GM12878 (cell line): ENCODE measurements at regions of chr13 and their contacts with region 1.

Region 1: GRCh38 chr13:94674609-94675348 is 37.6 kb downstream of the SOX21 start:
- DNase-seq: no peak
- ATAC-seq: peak; percentile 83
- H3K4me3 ChIP-seq: no peak overlapping the region
- H3K27ac ChIP-seq: no peak overlapping the region
- H3K4me1 ChIP-seq: no peaks in the 10 kb centered on the region
- H3K27me3 ChIP-seq: no peaks in the 10 kb centered on the region; a peak in 2 of 4 replicates
- CTCF ChIP-seq: peak; percentile 73 to 80 (median 73)
- EP300 ChIP-seq: no peak
- POLR2A ChIP-seq: no peak
- RAD21 ChIP-seq: peak; percentile 68

Region 2: DNA sequence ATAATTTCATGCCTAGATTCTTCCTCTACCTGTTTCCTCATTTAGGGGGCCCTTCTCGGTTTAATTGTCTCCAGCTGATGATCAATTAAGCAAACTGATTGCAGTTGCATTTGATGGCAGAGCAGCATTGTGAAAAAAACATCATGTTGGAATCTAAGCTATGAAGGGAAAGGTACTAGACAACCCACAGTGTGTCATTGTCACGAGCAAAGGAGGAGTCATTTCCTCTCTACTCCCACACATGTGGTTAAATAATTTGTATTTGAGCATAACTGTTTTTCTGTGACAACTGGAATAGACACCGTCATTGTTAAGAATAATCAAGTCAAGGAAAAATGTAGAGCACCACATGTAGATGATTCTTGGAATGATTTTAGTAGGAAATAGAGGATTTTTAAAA is 435.6 kb before region 1 on chr13:
- CTCF ChIA-PET with region 1: no interaction called
- POLR2A ChIA-PET with region 1: no interaction called
- RAD21 ChIA-PET with region 1: no interaction called
- SMC1A ChIA-PET with region 1: no interaction called
- in situ Hi-C with region 1: no loop called
- intact Hi-C with region 1: no loop called
- DNase-seq: no peak
- ATAC-seq: no peak
- H3K4me3 ChIP-seq: no peak overlapping the region
- H3K27ac ChIP-seq: no peak overlapping the region
- H3K4me1 ChIP-seq: no peaks in the 10 kb centered on the region
- H3K27me3 ChIP-seq: no peaks in the 10 kb centered on the region; a peak in 1 of 4 replicates
- CTCF ChIP-seq: no peak
- EP300 ChIP-seq: no peak
- POLR2A ChIP-seq: no peak
- RAD21 ChIP-seq: no peak

Region 3: DNA sequence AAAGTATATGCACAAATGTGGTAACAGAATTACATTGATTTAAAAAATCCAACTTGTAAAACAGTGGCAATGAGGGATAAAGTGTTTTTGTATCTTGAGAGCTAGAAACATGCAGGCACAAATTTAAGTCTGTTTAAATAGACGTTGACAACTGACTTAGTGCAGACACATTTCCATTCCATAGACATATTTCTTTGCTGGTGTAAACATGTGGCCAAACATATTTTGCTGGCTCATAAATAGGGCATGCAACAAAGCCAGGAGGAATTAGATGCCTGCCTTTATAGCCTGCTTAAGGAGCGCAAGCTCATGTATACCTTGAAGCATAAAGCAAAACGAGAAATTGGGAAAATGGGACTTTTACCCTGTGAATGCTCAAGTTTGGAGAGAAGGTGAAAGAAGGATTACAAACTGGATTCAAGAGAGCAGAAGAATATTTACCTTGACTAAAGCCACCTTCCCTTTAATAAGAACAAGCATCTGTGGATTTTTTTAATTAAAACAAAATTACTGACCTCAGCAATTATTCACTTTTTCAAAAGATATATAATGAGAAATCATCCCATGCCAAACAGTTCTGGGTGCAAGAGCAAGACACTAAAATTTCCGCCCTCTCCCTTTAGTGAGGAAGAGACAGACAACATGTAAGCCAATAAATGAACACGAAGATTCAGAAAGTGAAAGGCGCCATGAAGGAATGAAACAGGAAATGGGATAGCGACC is 266.3 kb before region 1 on chr13:
- CTCF ChIA-PET with region 1: no interaction called
- POLR2A ChIA-PET with region 1: no interaction called
- RAD21 ChIA-PET with region 1: no interaction called
- SMC1A ChIA-PET with region 1: no interaction called
- in situ Hi-C with region 1: no loop called
- intact Hi-C with region 1: no loop called
- DNase-seq: no peak
- ATAC-seq: no peak
- H3K4me3 ChIP-seq: no peak overlapping the region
- H3K27ac ChIP-seq: no peak overlapping the region
- H3K4me1 ChIP-seq: no peaks in the 10 kb centered on the region
- H3K27me3 ChIP-seq: no peaks in the 10 kb centered on the region
- CTCF ChIP-seq: no peak
- EP300 ChIP-seq: no peak
- POLR2A ChIP-seq: no peak
- RAD21 ChIP-seq: no peak

Region 4: DNA sequence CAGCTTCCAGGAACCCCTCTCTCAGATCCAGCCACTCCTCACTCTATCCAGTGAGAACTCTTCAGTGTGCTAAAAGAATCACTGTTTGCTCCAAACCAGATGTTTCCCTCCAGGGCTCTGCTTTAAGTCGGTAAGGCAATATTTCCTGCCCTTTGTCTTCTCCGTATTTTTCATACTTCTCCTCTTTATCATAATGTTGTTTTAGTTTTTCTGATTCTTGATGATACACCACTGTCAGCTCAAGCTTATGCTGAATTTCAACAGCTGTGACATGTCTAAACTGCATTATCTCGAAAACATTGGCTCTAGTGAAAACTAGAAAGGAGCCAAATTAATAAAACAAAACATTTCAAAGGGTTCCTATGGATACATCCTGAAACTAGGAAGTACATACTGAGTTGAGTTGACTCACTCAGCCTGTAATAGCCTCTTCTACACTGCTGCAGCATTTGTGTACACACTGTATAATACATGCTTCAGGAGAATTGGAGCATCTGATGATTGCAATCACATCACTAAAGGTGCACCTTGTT is 33.3 kb before region 1 on chr13:
- CTCF ChIA-PET with region 1: no interaction called
- POLR2A ChIA-PET with region 1: no interaction called
- RAD21 ChIA-PET with region 1: no interaction called
- SMC1A ChIA-PET with region 1: no interaction called
- in situ Hi-C with region 1: no loop called
- intact Hi-C with region 1: no loop called
- DNase-seq: no peak
- ATAC-seq: no peak
- H3K4me3 ChIP-seq: no peak overlapping the region
- H3K27ac ChIP-seq: no peak overlapping the region
- H3K4me1 ChIP-seq: no peaks in the 10 kb centered on the region
- H3K27me3 ChIP-seq: no peaks in the 10 kb centered on the region
- CTCF ChIP-seq: no peak
- EP300 ChIP-seq: no peak
- POLR2A ChIP-seq: no peak
- RAD21 ChIP-seq: no peak

Region 5: DNA sequence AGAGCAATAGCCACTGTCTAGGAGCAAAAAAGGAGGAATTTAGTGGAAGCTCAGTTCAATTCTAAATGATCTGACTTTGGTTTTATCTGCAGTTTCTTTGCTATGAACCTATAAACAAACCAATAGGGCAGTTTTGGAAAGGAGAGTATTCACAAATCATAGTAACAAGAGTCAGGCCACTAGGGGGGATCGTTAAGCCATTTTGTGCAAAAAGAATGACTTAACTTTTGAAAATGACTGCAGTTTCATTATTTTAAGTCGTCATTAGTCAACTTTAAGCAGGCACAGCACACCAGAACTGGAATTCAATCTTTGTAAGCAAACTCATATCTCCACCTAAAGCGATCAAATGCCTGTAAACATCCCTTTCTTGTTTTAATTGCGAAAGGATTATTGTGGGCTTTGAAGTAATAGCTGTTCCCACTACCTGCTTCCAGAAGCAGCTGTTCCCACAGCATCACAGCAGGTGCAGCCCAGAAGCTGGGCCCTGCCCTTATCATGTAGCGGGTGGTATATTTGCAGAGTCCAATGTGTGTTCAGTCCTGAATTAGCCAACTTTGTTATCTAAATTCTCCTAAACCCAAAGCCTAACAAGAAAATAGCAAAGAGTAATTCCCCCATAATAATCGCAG is 14.0 kb before region 1 on chr13:
- CTCF ChIA-PET with region 1: interaction called, 47 read pairs
- POLR2A ChIA-PET with region 1: interaction called, 3 read pairs
- RAD21 ChIA-PET with region 1: no interaction called
- SMC1A ChIA-PET with region 1: interaction called, 5 read pairs
- in situ Hi-C with region 1: no loop called
- intact Hi-C with region 1: no loop called
- DNase-seq: no peak
- ATAC-seq: peak; percentile 47
- H3K4me3 ChIP-seq: no peak overlapping the region
- H3K27ac ChIP-seq: no peak overlapping the region
- H3K4me1 ChIP-seq: peaks cover 9% of the 10 kb centered on the region
- H3K27me3 ChIP-seq: 0 out of 4 replicates have a peak, but pooled peaks cover 0 to 2% of the 10 kb centered on the region in 2 experiments
- CTCF ChIP-seq: peak in 2 of 3 experiments; percentile 27 to 29; a peak in 3 of 6 replicates
- EP300 ChIP-seq: no peak
- POLR2A ChIP-seq: no peak
- RAD21 ChIP-seq: peak; percentile 35

Region 6: GRCh38 chr13:94950303-94950702 is 275.5 kb after region 1 on chr13:
- CTCF ChIA-PET with region 1: no interaction called
- POLR2A ChIA-PET with region 1: no interaction called
- RAD21 ChIA-PET with region 1: no interaction called
- SMC1A ChIA-PET with region 1: no interaction called
- in situ Hi-C with region 1: no loop called
- intact Hi-C with region 1: loop called (anchors 10 kb)
- DNase-seq: no peak
- ATAC-seq: no peak
- H3K4me3 ChIP-seq: no peak overlapping the region
- H3K27ac ChIP-seq: no peak overlapping the region
- H3K4me1 ChIP-seq: no peaks in the 10 kb centered on the region
- H3K27me3 ChIP-seq: no peaks in the 10 kb centered on the region
- CTCF ChIP-seq: no peak
- EP300 ChIP-seq: no peak
- POLR2A ChIP-seq: no peak
- RAD21 ChIP-seq: no peak

Region 7: DNA sequence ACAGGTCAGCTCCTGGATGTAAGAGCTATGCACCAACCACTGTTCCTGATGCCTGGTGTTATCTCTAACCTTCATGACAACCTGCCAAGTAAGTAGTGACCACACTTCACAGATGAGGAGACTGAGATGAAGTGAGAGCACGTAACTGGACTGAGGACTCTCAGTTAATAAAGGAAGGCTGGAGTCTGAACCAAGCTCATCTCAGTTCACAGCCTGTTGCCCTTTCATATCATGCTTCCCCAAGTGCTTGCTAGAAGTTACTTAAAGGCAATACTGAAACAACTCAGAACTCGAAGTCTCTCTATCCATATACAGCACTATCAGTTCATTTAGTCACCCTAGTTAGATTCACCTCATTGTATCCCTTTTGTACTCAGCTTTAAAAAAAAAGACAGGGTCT is 506.8 kb after region 1 on chr13:
- CTCF ChIA-PET with region 1: interaction called, 3 read pairs
- POLR2A ChIA-PET with region 1: no interaction called
- RAD21 ChIA-PET with region 1: no interaction called
- SMC1A ChIA-PET with region 1: no interaction called
- in situ Hi-C with region 1: no loop called
- intact Hi-C with region 1: loop called (anchors 10 kb)
- DNase-seq: peak; percentile 40
- ATAC-seq: peak; percentile 85
- H3K4me3 ChIP-seq: no peak overlapping the region
- H3K27ac ChIP-seq: peak overlapping the region; percentile 57
- H3K4me1 ChIP-seq: peaks cover 30% of the 10 kb centered on the region
- H3K27me3 ChIP-seq: no peaks in the 10 kb centered on the region
- CTCF ChIP-seq: no peak
- EP300 ChIP-seq: no peak
- POLR2A ChIP-seq: no peak
- RAD21 ChIP-seq: no peak

Region 8: GRCh38 chr13:95474992-95475391 is 800.2 kb after region 1 on chr13:
- CTCF ChIA-PET with region 1: interaction called, 10 read pairs
- POLR2A ChIA-PET with region 1: no interaction called
- RAD21 ChIA-PET with region 1: no interaction called
- SMC1A ChIA-PET with region 1: interaction called, 3 read pairs
- in situ Hi-C with region 1: loop called (anchors 10 kb)
- intact Hi-C with region 1: loop called (anchors 2 kb)
- DNase-seq: no peak
- ATAC-seq: no peak
- H3K4me3 ChIP-seq: no peak overlapping the region
- H3K27ac ChIP-seq: no peak overlapping the region
- H3K4me1 ChIP-seq: peaks cover 15% of the 10 kb centered on the region
- H3K27me3 ChIP-seq: no peaks in the 10 kb centered on the region
- CTCF ChIP-seq: no peak
- EP300 ChIP-seq: no peak
- POLR2A ChIP-seq: no peak
- RAD21 ChIP-seq: no peak

Region 9: GRCh38 chr13:95480131-95480545 is 805.4 kb after region 1 on chr13:
- CTCF ChIA-PET with region 1: interaction called, 10 read pairs
- POLR2A ChIA-PET with region 1: no interaction called
- RAD21 ChIA-PET with region 1: no interaction called
- SMC1A ChIA-PET with region 1: interaction called, 3 read pairs
- in situ Hi-C with region 1: loop called (anchors 10 kb)
- intact Hi-C with region 1: loop called (anchors 2 kb)
- DNase-seq: peak; percentile 71
- ATAC-seq: peak; percentile 75
- H3K4me3 ChIP-seq: no peak overlapping the region
- H3K27ac ChIP-seq: peak overlapping the region; percentile 54
- H3K4me1 ChIP-seq: peaks cover 21% of the 10 kb centered on the region
- H3K27me3 ChIP-seq: no peaks in the 10 kb centered on the region
- CTCF ChIP-seq: no peak
- EP300 ChIP-seq: no peak
- POLR2A ChIP-seq: no peak
- RAD21 ChIP-seq: no peak